Heart left ventricle (tissue), 16 donors: ENCODE measurements at regions of chr1 and their contacts with region 1.

Region 1: DNA sequence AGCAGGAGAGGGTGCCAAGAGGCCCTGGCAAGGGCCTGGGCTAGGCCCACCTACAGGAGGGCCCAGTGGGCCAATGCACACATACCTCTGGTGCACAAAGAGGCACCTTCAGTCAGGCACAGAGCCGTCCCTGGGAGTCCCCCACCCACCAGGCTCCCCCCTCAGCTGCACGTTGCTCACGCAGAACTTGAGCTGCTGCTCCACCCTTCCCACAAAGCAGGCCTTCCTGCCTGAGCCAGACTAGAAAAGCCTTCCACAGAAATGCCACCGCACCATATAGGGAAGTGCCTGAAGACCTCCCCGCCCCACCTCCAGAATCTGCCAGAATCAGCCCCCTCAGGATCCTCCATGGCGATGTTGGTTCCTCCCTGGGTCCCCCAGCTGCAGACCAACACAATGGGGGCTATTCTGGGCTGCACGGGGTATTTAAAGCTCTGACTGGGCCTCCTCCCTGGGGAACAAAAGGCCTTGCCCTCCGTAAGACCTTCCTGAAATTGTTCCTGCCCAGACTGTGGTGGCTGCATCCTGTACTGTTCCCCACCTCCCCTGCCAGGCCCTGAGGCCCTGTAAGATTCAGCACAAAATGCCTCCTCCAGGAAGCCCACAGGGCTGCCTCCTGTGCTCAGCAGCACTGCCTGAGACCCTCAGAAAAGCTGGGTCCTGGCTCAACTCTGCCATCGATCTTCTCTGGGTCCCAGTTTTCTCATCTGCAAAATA is 27.2 kb downstream of the HSPG2 start:
- DNase-seq: peak; percentile 84 to 90 (median 87)
- ATAC-seq: peak; percentile 43 to 69 (median 54)
- H3K4me3 ChIP-seq: no peak overlapping the region
- H3K27ac ChIP-seq: peak overlapping the region; percentile 75 to 98 (median 89)
- H3K4me1 ChIP-seq: peaks cover 38 to 100% (median 98%) of the 10 kb centered on the region in 12 donors
- H3K27me3 ChIP-seq: no peaks in the 10 kb centered on the region
- CTCF ChIP-seq: no peak
- POLR2A ChIP-seq: peak in 1 of 2 donors; percentile 28

Region 2: GRCh38 chr1:21924503-21925005 is 14.6 kb after region 1 on chr1:
- intact Hi-C with region 1: loop called in 2 of 10 experiments (anchors 2 kb)
- DNase-seq: peak in 4 of 5 donors; percentile 73 to 86 (median 78)
- ATAC-seq: peak in 3 of 4 donors; percentile 4 to 32 (median 15)
- H3K4me3 ChIP-seq: peak overlapping the region in 1 of 12 donors; percentile 4
- H3K27ac ChIP-seq: peak overlapping the region; percentile 72 to 98 (median 92)
- H3K4me1 ChIP-seq: peaks cover 28 to 100% (median 94%) of the 10 kb centered on the region in 12 donors
- H3K27me3 ChIP-seq: no peaks in the 10 kb centered on the region
- CTCF ChIP-seq: no peak
- POLR2A ChIP-seq: no peak

Region 3: DNA sequence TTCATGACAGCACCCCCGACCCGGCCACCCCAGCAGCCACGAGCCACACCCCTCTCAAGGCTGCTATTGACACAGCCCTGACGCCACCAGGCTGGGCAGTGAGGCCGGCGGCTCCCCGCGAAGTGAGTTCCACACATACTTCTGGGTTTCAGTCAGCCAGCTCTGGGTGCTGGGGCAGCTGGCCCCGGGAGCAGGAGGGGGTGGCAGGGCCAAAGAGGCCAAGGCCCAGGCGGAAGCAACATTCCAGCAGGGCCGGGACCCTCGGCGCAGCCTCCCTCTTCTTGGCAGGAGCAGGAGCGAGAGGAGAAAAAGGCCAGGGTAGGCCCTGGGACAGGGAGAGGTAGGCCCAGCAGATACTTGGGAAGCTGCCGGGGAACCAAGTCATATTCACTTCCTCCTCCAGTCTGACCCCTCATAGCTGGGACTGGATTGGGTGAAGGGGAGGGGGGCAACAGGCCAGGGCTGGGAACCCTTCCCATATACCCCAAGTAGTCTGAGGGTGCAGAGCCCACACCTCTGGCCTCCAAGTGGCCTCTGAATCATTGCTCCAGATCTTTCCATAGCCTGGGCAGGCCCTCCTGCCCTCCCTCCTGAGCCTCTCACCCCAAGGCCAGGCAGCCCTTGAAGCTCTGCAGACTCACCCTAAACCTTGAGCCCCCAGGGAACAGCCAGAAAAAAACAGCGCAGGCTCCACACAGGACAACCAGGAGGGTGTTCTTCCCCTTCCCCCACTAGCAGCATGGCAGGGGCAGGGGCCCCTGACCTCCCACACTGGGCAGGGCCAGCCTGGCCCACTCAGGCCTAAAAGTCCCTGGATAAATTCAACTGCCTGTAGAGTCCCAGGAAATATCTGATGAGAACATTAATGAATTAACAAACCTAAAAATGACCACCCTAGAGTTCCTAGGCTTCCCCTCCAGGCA is 21.5 kb after region 1 on chr1:
- intact Hi-C with region 1: loop called in 2 of 10 experiments (anchors 2 kb)
- DNase-seq: peak; percentile 71 to 89 (median 83)
- ATAC-seq: peak; percentile 29 to 60 (median 57)
- H3K4me3 ChIP-seq: peak overlapping the region in 9 of 12 donors; percentile 4 to 93 (median 88)
- H3K27ac ChIP-seq: peak overlapping the region; percentile 87 to 98 (median 92)
- H3K4me1 ChIP-seq: peaks cover 27 to 100% (median 75%) of the 10 kb centered on the region in 12 donors
- H3K27me3 ChIP-seq: no peaks in the 10 kb centered on the region
- CTCF ChIP-seq: no peak
- POLR2A ChIP-seq: peak in 1 of 2 donors; percentile 44

Region 4: GRCh38 chr1:22131875-22132486 is 222.0 kb after region 1 on chr1:
- intact Hi-C with region 1: no loop called
- DNase-seq: no peak
- ATAC-seq: peak in 2 of 4 donors; percentile 34 to 53
- H3K4me3 ChIP-seq: no peak overlapping the region
- H3K27ac ChIP-seq: no peak overlapping the region
- H3K4me1 ChIP-seq: peaks cover 0 to 4% (median 0%) of the 10 kb centered on the region in 12 donors
- H3K27me3 ChIP-seq: peaks cover 0 to 33% (median 1%) of the 10 kb centered on the region in 9 donors
- CTCF ChIP-seq: peak; percentile 35 to 69 (median 62)
- POLR2A ChIP-seq: no peak